Left colon (tissue), 2 donors: ENCODE measurements at regions of chr21 and their contacts with region 1.

Region 1: DNA sequence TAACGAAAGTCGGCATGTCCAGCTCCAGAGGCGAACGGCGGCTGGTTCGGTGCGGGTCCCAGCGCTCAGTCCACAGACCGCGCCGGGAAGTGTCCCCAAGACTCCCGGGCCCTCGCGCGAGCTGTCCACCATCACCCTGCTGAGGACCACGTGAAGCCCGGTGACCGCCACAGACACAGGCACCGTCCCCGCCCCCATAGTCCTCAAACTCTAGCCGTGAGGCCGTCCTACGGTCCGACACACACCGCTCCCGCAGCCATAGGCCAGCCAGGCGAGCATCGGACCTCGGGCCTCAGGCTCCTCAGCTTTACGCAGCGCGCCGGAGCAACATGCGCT is 535 bp downstream of the SETD4 start:
- DNase-seq: peak; percentile 59 to 68
- ATAC-seq: peak; percentile 52

Region 2: GRCh38 chr21:35138665-35139381 is 921.0 kb before region 1 on chr21:
- intact Hi-C with region 1: no loop called
- DNase-seq: no peak
- ATAC-seq: no peak

Region 3: GRCh38 chr21:35400233-35400957 is 659.4 kb before region 1 on chr21:
- intact Hi-C with region 1: no loop called
- DNase-seq: peak in 1 of 2 donors; percentile 7
- ATAC-seq: peak; percentile 99

Region 4: DNA sequence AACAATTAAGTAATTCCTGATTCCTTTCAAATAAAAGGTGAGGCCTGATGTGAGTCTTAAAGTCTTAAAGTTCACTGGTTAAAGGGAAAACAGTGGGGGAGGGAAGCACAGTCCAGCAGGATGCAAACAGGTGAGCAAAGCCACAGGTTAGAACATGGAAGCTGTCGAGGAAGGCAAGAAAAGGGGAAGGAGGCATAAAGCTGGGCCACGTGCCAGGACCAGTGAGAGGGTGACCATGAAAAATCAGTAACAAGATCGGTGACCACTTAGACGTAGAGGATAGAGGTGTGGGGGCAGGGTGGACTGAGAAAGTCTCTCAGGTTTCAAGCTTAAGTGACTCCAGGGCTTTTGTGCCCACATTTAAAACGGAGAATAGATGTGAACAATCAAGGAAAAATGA is 230.7 kb before region 1 on chr21:
- intact Hi-C with region 1: no loop called
- DNase-seq: peak in 1 of 2 donors; percentile 6
- ATAC-seq: no peak

Region 5: DNA sequence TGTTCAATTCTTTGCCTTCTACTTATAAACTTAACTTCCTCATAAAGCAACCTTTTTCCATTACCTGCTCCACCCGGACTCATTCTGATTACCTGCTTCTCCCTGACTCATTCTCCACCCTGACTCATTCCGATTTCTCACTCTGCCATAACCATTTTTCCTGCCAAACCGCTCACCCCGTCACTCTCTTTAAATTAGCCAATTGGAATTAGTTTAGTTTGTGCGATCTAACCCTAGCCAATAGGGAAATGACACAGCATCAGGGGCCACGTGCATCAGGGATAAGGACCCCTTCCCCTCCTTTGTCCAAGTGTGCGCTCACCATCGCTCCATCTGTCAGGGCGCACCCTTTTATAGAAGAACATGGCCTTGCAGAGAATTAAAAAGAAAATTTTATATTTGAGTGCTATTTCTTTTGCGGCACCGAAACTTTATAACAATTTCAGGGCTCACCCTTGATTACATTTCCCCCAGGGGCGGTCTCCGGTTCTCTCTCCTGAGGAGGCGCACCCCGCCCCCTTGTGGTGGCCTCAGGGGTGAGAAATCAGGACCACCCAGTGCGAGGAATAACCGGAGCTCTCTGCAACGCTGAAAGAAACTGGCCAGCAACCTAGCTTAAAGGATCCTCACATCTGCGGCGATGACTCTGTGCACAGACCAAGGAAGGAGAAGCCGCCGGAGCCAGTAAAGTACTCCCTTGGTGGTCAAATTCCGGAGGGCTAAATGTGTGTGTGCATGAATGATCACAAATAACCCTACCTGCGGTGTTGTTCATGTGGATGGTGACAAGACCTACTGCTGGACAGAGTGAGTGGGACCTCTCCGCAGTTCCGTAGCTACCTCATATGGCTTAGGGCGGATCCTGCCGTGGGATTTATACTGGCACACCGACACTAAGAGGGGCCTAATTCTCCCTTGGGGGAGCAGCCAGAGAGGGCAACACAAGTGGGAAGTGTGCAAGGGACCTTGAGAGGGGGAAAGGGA is 44.8 kb after region 1 on chr21:
- intact Hi-C with region 1: loop called in 1 of 2 experiments (anchors 5 kb)
- DNase-seq: peak in 1 of 2 donors; percentile 56
- ATAC-seq: peak; percentile 47

Region 6: DNA sequence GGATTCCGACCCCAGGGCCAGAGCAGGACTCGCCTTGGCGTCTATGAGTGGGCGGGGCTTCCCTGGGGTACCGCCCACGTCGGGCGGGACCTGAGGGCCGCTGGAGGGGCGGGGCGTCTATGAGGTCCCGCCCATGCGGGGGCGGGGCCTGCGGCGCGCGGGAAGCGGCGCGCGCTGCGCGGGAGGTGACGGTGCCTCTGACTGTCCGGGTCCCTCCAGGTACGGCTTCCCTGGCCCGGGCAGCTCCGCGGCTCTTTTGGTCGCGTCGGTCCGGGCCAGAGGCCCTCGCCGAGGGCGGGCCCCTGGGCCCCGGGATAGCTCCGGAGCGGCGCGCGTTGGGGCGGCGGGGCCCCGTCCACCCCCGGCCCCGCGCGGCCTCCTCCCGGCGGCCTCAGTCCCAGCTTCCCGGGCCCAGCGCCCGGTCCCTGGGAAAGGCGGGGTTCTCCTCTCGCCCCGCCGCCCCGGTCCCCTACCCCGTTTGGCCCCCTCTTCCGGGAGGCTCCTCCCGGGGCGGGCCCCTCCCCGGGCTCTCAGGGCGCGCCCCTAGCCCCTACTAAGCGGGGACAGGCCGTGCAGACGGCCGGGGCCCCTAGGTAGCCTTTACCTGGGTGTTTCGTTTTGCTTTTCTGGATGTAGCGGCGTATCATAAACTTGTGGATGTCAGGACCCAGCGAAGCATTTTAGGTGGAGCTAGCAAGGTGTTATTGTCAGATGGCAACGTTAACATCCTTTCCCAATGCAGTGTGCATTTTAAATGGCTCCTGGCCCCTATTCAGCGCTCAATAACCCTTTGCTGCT is 325.6 kb after region 1 on chr21 and contains the start of gene CHAF1B:
- intact Hi-C with region 1: no loop called
- DNase-seq: peak; percentile 54 to 85
- ATAC-seq: peak; percentile 95
- total RNA-seq, gene CHAF1B: 1.4 to 2.7 TPM